ENCODE measurements at regions of chr2 and their contacts with region 1.

Region 1: GRCh38 chr2:182666674-182667314 is 49.3 kb upstream of the DNAJC10 start:
- DNase-seq: peak; percentile 47
- H3K4me3 ChIP-seq: no peak overlapping the region
- H3K27ac ChIP-seq: no peak overlapping the region
- H3K4me1 ChIP-seq: no peaks in the 10 kb centered on the region
- H3K27me3 ChIP-seq: no peaks in the 10 kb centered on the region
- CTCF ChIP-seq: peak; percentile 35 to 62
- POLR2A ChIP-seq: no peak

Region 2: DNA sequence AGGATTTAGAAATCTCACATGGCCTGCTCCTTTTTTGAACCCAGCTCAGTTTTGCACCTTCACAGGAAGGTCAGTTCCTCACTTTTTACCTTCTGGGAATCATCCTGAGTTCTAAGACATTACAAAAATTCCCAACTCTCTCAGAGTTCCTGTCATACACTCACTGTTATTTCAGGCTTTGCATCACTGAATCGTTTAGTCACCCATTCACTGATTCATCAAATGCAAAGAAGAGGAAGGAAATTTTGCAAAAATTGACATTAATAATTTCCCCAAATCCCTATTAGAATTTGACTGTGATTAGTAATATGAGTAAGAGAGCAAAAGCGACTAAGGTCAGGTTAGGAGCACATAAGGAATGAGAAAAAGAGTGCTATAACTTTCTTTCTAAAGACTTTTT is 437.5 kb before region 1 on chr2:
- CTCF ChIA-PET with region 1: no interaction called
- POLR2A ChIA-PET with region 1: no interaction called
- dilution Hi-C with region 1: no loop called
- intact Hi-C with region 1: no loop called
- DNase-seq: peak; percentile 61
- H3K4me3 ChIP-seq: no peak overlapping the region
- H3K27ac ChIP-seq: no peak overlapping the region
- H3K4me1 ChIP-seq: peaks cover 9% of the 10 kb centered on the region
- H3K27me3 ChIP-seq: no peaks in the 10 kb centered on the region
- CTCF ChIP-seq: no peak
- POLR2A ChIP-seq: no peak

Region 3: DNA sequence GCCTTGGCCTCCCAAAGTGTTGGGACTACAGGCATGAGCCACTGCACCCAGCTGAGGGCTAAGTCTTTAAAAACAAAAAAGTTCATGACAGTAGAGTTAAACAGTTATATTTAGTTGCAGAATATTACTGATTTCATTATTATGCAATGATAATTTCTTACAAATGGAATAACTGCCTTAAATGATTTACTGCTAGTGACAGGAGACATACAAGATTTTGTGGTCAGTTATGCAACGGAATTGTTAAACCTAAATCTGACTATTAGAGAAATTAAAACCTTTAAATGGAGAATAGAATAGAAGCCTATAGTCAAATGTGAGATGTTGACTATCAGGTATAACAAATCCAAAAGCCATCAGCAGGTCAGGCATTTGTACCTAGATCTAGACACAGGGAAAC is 39.0 kb after region 1 on chr2:
- CTCF ChIA-PET with region 1: no interaction called
- POLR2A ChIA-PET with region 1: no interaction called
- dilution Hi-C with region 1: no loop called
- intact Hi-C with region 1: no loop called
- DNase-seq: no peak
- H3K4me3 ChIP-seq: no peak overlapping the region
- H3K27ac ChIP-seq: no peak overlapping the region
- H3K4me1 ChIP-seq: no peaks in the 10 kb centered on the region
- H3K27me3 ChIP-seq: no peaks in the 10 kb centered on the region
- CTCF ChIP-seq: no peak
- POLR2A ChIP-seq: no peak

Region 4: GRCh38 chr2:182715896-182716668 is 49.3 kb after region 1 on chr2 and contains the start of gene DNAJC10:
- CTCF ChIA-PET with region 1: interaction called, 31 read pairs
- POLR2A ChIA-PET with region 1: no interaction called
- dilution Hi-C with region 1: no loop called
- intact Hi-C with region 1: loop called (anchors 1 kb)
- DNase-seq: peak; percentile 98
- H3K4me3 ChIP-seq: peak within 1 kb of the TSS; percentile 65 to 95 (median 95)
- H3K27ac ChIP-seq: peak within 1 kb of the TSS; percentile 88
- H3K4me1 ChIP-seq: peaks cover 32% of the 10 kb centered on the region
- H3K27me3 ChIP-seq: no peaks in the 10 kb centered on the region
- CTCF ChIP-seq: peak in 1 of 2 donors; percentile 0
- POLR2A ChIP-seq: peak; percentile 95
- total RNA-seq, gene DNAJC10: 171 and 201 TPM in 2 replicates

Region 5: DNA sequence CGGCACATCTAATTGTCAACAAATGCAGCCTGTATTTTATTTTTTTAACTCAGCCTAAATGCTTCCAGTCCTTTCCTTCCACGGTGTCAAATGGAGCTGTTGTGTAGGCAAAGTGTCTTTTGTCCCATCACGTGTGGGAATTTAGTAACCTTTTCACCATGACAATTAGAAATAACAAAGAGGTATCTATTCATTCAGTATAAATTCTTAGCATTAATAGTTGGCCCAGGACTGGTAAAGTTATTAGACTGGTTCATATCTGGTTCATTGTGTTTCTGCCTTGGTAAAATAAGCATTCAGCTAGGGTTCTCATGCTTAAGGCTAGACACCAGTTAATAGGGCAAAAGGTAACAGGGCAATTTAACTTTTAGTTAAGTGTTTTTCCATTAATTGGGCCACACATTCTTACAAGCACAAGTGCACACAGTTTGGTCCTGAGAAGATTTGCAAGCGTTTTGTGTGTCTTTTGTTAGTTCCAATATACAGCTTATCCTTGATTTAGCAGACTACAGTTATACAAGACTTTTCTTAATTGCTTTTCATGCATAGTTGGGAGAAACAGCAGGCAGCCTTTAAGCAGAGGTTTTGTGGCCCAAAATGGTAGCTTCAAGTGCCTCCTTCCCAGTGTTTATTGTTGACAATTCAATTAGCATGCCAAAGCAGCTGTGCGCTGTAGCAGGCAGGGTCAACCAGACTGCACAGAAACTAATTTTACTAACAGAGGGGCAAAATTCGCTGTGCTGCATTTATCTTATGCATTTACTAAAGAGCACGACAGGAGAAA is 151.9 kb after region 1 on chr2:
- CTCF ChIA-PET with region 1: no interaction called
- POLR2A ChIA-PET with region 1: no interaction called
- dilution Hi-C with region 1: no loop called
- intact Hi-C with region 1: no loop called
- DNase-seq: no peak
- H3K4me3 ChIP-seq: no peak overlapping the region
- H3K27ac ChIP-seq: no peak overlapping the region
- H3K4me1 ChIP-seq: no peaks in the 10 kb centered on the region
- H3K27me3 ChIP-seq: peaks cover 0 to 3% of the 10 kb centered on the region in 2 experiments
- CTCF ChIP-seq: no peak
- POLR2A ChIP-seq: no peak

Region 6: DNA sequence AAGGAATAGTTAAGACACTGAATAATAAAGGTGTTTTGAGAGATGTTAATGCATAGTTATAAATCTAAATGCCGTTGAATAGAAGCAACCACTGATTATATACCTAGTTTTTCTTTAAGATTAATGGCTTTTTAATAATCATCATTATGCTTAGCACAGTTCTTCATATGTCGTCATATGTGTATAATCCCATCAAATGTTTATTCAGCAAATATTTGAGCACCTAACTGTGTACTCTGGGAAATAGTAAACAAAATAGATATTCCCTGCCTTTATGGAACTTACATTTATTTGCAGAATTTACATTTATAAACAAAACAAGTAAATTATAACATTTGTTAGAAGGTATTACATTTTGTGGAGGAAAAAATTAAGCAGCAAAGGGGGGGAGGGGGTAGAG is 467.2 kb after region 1 on chr2:
- CTCF ChIA-PET with region 1: no interaction called
- POLR2A ChIA-PET with region 1: no interaction called
- dilution Hi-C with region 1: no loop called
- intact Hi-C with region 1: no loop called
- DNase-seq: no peak
- H3K4me3 ChIP-seq: no peak overlapping the region
- H3K27ac ChIP-seq: no peak overlapping the region
- H3K4me1 ChIP-seq: no peaks in the 10 kb centered on the region
- H3K27me3 ChIP-seq: no peaks in the 10 kb centered on the region
- CTCF ChIP-seq: no peak
- POLR2A ChIP-seq: no peak